HEK293 (cell line): ENCODE measurements at regions of chr3 and their contacts with region 1.

Region 1: DNA sequence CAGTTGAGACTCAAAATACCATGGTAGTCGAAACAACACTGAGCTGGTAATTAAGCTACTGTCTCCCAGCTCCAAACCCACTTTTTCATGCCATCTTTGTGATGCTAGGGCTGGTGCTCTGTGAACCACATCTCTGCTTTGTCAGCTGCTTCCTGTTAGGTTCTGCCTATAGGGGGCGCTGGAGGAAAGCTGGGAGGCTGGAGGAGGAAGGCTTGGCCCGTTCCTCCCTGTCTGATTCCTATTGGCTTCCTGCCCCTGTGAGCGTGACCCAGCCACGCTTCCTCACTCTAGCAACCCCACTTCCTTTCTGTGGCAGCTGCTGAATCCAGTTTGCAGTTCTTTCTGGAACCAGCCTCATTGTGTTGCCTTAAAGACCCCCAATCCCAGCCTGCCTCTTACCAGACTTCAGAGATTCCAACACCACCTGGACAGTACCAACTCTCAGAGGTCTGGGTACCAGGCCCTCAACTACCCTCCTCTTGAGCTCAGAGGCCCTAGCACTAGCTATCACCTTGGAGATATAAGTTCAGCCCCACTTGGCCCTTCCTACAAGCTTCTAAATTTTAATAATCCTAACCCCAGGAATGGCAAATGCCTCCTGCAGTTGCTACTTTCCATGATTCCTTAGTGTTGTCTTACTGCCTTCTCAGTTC is 120.9 kb downstream of the ERC2 start:
- H3K4me3 ChIP-seq: no peak overlapping the region
- H3K27ac ChIP-seq: no peak overlapping the region
- H3K4me1 ChIP-seq: no peaks in the 10 kb centered on the region
- CTCF ChIP-seq: no peak

Region 2: GRCh38 chr3:56379704-56380287 is 32.5 kb after region 1 on chr3:
- CTCF ChIA-PET with region 1: no interaction called
- POLR2A ChIA-PET with region 1: no interaction called
- H3K4me3 ChIP-seq: no peak overlapping the region
- H3K27ac ChIP-seq: no peak overlapping the region
- H3K4me1 ChIP-seq: no peaks in the 10 kb centered on the region
- CTCF ChIP-seq: no peak

Region 3: GRCh38 chr3:56443372-56443771 is 96.0 kb after region 1 on chr3:
- CTCF ChIA-PET with region 1: interaction called, 16 read pairs
- POLR2A ChIA-PET with region 1: no interaction called
- H3K4me3 ChIP-seq: no peak overlapping the region
- H3K27ac ChIP-seq: no peak overlapping the region
- H3K4me1 ChIP-seq: no peaks in the 10 kb centered on the region
- CTCF ChIP-seq: no peak

Region 4: DNA sequence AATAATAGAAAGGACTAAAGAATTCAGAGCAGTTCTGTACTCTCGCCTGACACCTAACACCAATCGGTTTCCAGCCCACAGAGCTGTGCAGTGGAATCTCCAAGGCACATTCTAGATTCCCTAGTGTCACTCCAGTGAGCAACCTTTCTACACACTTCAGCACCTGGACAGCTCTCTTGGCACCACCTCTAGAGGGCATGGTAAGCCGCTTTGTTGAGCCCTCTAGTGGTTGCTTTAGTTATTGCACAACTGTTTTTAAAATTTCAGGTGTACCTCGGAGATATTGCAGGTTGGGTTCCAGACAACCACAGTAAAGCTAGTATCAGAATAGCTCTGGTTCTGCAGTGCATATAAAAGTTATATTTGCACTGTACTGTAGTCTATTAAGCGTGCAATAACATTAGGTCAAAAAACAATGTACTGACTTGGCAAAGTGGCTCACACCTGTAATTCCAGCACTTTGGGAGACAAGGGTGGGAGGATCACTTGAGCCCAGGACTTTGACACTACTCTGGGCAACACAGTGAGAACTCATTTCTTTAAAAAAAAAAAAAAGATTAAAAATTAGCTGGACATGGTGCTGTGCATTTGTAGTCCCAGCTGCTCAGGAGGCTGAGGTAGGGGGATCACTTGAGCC is 147.5 kb after region 1 on chr3:
- CTCF ChIA-PET with region 1: interaction called, 37 read pairs
- POLR2A ChIA-PET with region 1: no interaction called
- H3K4me3 ChIP-seq: no peak overlapping the region
- H3K27ac ChIP-seq: no peak overlapping the region
- H3K4me1 ChIP-seq: no peaks in the 10 kb centered on the region
- CTCF ChIP-seq: peak; percentile 92